ENCODE measurements at regions of chr5 and their contacts with region 1.

Region 1: DNA sequence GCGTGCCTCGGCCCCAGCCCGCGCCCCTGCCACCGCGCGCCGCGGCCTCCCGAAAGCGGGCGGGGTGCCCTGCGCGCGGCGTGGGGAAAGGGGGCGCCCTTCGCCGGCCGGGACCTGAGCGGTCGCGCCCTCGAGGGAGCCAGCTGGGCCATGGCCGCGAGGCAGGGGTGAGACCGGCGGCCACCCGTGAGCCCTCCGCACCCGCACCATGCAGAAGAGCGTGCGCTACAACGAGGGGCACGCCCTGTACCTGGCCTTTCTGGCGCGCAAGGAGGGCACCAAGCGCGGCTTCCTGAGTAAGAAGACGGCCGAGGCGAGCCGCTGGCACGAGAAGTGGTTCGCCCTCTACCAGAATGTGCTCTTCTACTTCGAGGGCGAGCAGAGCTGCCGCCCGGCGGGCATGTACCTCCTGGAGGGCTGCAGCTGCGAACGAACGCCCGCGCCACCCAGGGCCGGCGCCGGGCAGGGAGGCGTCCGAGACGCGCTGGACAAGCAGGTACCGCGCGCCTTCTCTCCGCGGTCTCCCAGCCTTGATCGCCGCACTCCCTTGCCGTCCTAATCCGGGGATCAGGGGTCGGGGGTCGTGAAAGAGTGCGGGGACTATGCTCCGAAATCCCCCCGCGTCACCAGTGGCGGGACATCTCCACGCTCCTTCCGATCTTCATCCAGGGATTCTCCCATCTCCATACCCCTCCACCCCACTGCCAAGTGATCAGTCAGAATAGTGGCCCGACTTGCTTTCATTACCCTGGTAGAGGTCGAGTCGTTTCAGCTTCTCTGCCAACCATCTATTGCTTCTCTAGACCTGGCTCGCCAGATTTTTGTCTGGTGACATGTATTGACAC is 590 bp downstream of the RASGRF2 start:
- DNase-seq: no peak
- H3K4me3 ChIP-seq: peak overlapping the region; percentile 37 to 55 (median 51)
- H3K27ac ChIP-seq: peak overlapping the region; percentile 68 to 75 (median 72)
- H3K4me1 ChIP-seq: peaks cover 0 to 13% (median 8%) of the 10 kb centered on the region in 4 donors
- H3K27me3 ChIP-seq: peaks cover 0 to 36% (median 16%) of the 10 kb centered on the region in 3 donors
- CTCF ChIP-seq: no peak
- EP300 ChIP-seq: no peak
- POLR2A ChIP-seq: no peak

Region 2: DNA sequence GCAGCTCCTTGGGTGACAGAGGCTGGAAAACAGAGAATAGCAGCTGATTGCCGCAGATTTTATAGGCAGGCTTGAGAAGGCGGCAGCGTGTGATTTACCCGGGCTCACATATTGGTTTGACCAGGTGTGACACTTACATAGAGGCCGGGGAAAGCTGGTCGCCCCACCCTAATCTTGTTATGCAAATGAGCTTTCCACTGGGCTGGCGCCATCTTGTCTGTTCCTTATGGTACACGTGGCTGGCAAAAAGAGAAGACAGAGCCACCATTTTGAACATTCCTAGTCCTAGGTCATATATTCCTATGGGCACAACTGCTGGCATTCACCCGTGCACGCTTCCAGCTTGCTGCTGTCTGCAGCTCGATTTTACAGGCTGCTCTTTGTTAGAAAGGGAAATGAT is 652.2 kb before region 1 on chr5:
- intact Hi-C with region 1: no loop called
- DNase-seq: no peak
- H3K4me3 ChIP-seq: no peak overlapping the region
- H3K27ac ChIP-seq: no peak overlapping the region
- H3K4me1 ChIP-seq: no peaks in the 10 kb centered on the region
- H3K27me3 ChIP-seq: no peaks in the 10 kb centered on the region
- CTCF ChIP-seq: no peak
- EP300 ChIP-seq: no peak
- POLR2A ChIP-seq: no peak

Region 3: DNA sequence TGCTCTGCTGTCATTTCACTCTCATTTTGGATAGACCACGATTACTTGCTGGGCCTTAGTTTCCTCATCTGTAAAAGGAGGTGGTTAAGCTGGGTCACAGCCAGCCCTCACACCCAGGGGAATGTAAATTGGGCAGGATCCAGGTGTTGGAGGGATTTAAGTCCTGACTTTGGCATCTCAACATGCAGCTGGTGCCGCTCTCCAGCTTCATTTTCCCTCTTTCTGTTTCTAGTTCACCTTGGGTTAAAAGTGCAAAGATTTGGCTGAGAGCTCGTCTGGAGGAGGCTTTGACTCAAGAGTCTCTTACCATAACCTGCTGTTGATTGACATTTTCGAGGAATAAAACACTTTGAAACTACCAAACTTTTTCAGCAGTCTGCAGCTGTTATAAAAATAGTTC is 161.7 kb before region 1 on chr5:
- intact Hi-C with region 1: no loop called
- DNase-seq: no peak
- H3K4me3 ChIP-seq: no peak overlapping the region
- H3K27ac ChIP-seq: no peak overlapping the region
- H3K4me1 ChIP-seq: peaks cover 0 to 4% (median 2%) of the 10 kb centered on the region in 4 donors
- H3K27me3 ChIP-seq: no peaks in the 10 kb centered on the region
- CTCF ChIP-seq: no peak
- EP300 ChIP-seq: no peak
- POLR2A ChIP-seq: no peak

Region 4: GRCh38 chr5:80928073-80928472 is 32.7 kb before region 1 on chr5:
- intact Hi-C with region 1: no loop called
- DNase-seq: no peak
- H3K4me3 ChIP-seq: no peak overlapping the region
- H3K27ac ChIP-seq: no peak overlapping the region
- H3K4me1 ChIP-seq: no peaks in the 10 kb centered on the region
- H3K27me3 ChIP-seq: no peaks in the 10 kb centered on the region
- CTCF ChIP-seq: no peak
- EP300 ChIP-seq: no peak
- POLR2A ChIP-seq: no peak

Region 5: GRCh38 chr5:81068063-81068462 is 107.3 kb after region 1 on chr5:
- intact Hi-C with region 1: loop called (anchors 10 kb)
- DNase-seq: no peak
- H3K4me3 ChIP-seq: no peak overlapping the region
- H3K27ac ChIP-seq: no peak overlapping the region
- H3K4me1 ChIP-seq: peaks cover 0 to 7% (median 0%) of the 10 kb centered on the region in 4 donors
- H3K27me3 ChIP-seq: no peaks in the 10 kb centered on the region
- CTCF ChIP-seq: no peak
- EP300 ChIP-seq: no peak
- POLR2A ChIP-seq: no peak

Region 6: GRCh38 chr5:81125959-81126358 is 165.2 kb after region 1 on chr5:
- intact Hi-C with region 1: loop called (anchors 5 kb)
- DNase-seq: peak; percentile 87
- H3K4me3 ChIP-seq: no peak overlapping the region
- H3K27ac ChIP-seq: peak overlapping the region in 3 of 4 donors; percentile 11 to 60 (median 29)
- H3K4me1 ChIP-seq: peaks cover 0 to 14% (median 3%) of the 10 kb centered on the region in 4 donors
- H3K27me3 ChIP-seq: no peaks in the 10 kb centered on the region
- CTCF ChIP-seq: no peak
- EP300 ChIP-seq: peak in 1 of 4 donors; percentile 6
- POLR2A ChIP-seq: no peak

Region 7: GRCh38 chr5:81165493-81166119 is 204.9 kb after region 1 on chr5:
- intact Hi-C with region 1: loop called (anchors 5 kb)
- DNase-seq: no peak
- H3K4me3 ChIP-seq: no peak overlapping the region
- H3K27ac ChIP-seq: peak overlapping the region in 1 of 4 donors; percentile 81
- H3K4me1 ChIP-seq: peaks cover 0 to 29% (median 12%) of the 10 kb centered on the region in 4 donors
- H3K27me3 ChIP-seq: no peaks in the 10 kb centered on the region
- CTCF ChIP-seq: peak in 1 of 4 experiments; percentile 44
- EP300 ChIP-seq: no peak
- POLR2A ChIP-seq: no peak

Region 8: GRCh38 chr5:81194633-81195333 is 234.0 kb after region 1 on chr5:
- intact Hi-C with region 1: loop called (anchors 10 kb)
- DNase-seq: peak; percentile 85
- H3K4me3 ChIP-seq: no peak overlapping the region
- H3K27ac ChIP-seq: no peak overlapping the region
- H3K4me1 ChIP-seq: peaks cover 0 to 10% (median 7%) of the 10 kb centered on the region in 4 donors
- H3K27me3 ChIP-seq: no peaks in the 10 kb centered on the region
- CTCF ChIP-seq: peak; percentile 49 to 84 (median 58)
- EP300 ChIP-seq: no peak
- POLR2A ChIP-seq: no peak